ENCODE measurements at regions of chr7 and their contacts with region 1.

Region 1: GRCh38 chr7:151110941-151111645 is 24.8 kb downstream of the AGAP3 start:
- DNase-seq: peak; percentile 61 to 74 (median 72)
- H3K4me3 ChIP-seq: no peak overlapping the region
- H3K4me3 Mint-ChIP-seq: no peak overlapping the region
- H3K27ac ChIP-seq: no peak overlapping the region
- H3K27ac Mint-ChIP-seq: no peak overlapping the region
- H3K4me1 ChIP-seq: peaks cover 3 to 7% of the 10 kb centered on the region in 2 donors
- H3K4me1 Mint-ChIP-seq: peaks cover 16% of the 10 kb centered on the region
- H3K27me3 ChIP-seq: peaks cover 2 to 17% of the 10 kb centered on the region in 2 donors
- H3K27me3 Mint-ChIP-seq: peaks cover 21 to 29% (median 21%) of the 10 kb centered on the region in 3 donors
- CTCF ChIP-seq: peak; percentile 89

Region 2: GRCh38 chr7:150852371-150852920 is 258.6 kb before region 1 on chr7 and contains the start of gene AOC1:
- intact Hi-C with region 1: no loop called
- DNase-seq: no peak
- H3K4me3 ChIP-seq: no peak within 1 kb of the TSS
- H3K4me3 Mint-ChIP-seq: peak within 1 kb of the TSS; percentile 35 to 66
- H3K27ac ChIP-seq: no peak within 1 kb of the TSS
- H3K27ac Mint-ChIP-seq: no peak within 1 kb of the TSS
- H3K4me1 ChIP-seq: peaks cover 9 to 17% of the 10 kb centered on the region in 2 donors
- H3K4me1 Mint-ChIP-seq: peaks cover 19% of the 10 kb centered on the region
- H3K27me3 ChIP-seq: no peaks in the 10 kb centered on the region
- H3K27me3 Mint-ChIP-seq: peaks cover 3 to 7% (median 6%) of the 10 kb centered on the region in 3 donors
- CTCF ChIP-seq: no peak
- polyA plus RNA-seq, gene AOC1: 0.16 to 0.31 TPM in 2 of 3 donors, not detected in the other

Region 3: GRCh38 chr7:150962553-150963399 is 148.3 kb before region 1 on chr7:
- intact Hi-C with region 1: loop called in 1 of 2 experiments (anchors 5 kb)
- DNase-seq: peak; percentile 2 to 16 (median 12)
- H3K4me3 ChIP-seq: no peak overlapping the region
- H3K4me3 Mint-ChIP-seq: peak overlapping the region in 1 of 2 donors; percentile 43
- H3K27ac ChIP-seq: no peak overlapping the region
- H3K27ac Mint-ChIP-seq: peak overlapping the region in 1 of 7 donors; percentile 79
- H3K4me1 ChIP-seq: no peaks in the 10 kb centered on the region
- H3K4me1 Mint-ChIP-seq: peaks cover 10% of the 10 kb centered on the region
- H3K27me3 ChIP-seq: peaks cover 0 to 29% of the 10 kb centered on the region in 2 donors
- H3K27me3 Mint-ChIP-seq: peaks cover 30 to 75% (median 44%) of the 10 kb centered on the region in 3 donors
- CTCF ChIP-seq: peak; percentile 70

Region 4: GRCh38 chr7:151028131-151028947 is 82.8 kb before region 1 on chr7 and contains the start of gene ABCB8:
- intact Hi-C with region 1: loop called in 1 of 2 experiments (anchors 5 kb)
- DNase-seq: peak; percentile 97 to 98 (median 98)
- H3K4me3 ChIP-seq: peak within 1 kb of the TSS; percentile 53 to 98 (median 96)
- H3K4me3 Mint-ChIP-seq: peak within 1 kb of the TSS; percentile 91 to 94
- H3K27ac ChIP-seq: peak within 1 kb of the TSS; percentile 71 to 81
- H3K27ac Mint-ChIP-seq: peak within 1 kb of the TSS; percentile 91 to 97 (median 95)
- H3K4me1 ChIP-seq: peaks cover 14 to 18% of the 10 kb centered on the region in 2 donors
- H3K4me1 Mint-ChIP-seq: peaks cover 25% of the 10 kb centered on the region
- H3K27me3 ChIP-seq: peaks cover 0 to 4% of the 10 kb centered on the region in 2 donors
- H3K27me3 Mint-ChIP-seq: peaks cover 3 to 22% (median 6%) of the 10 kb centered on the region in 3 donors
- CTCF ChIP-seq: peak; percentile 64
- polyA plus RNA-seq, gene ABCB8: 9.3 to 19.9 (median 9.5) TPM

Region 5: DNA sequence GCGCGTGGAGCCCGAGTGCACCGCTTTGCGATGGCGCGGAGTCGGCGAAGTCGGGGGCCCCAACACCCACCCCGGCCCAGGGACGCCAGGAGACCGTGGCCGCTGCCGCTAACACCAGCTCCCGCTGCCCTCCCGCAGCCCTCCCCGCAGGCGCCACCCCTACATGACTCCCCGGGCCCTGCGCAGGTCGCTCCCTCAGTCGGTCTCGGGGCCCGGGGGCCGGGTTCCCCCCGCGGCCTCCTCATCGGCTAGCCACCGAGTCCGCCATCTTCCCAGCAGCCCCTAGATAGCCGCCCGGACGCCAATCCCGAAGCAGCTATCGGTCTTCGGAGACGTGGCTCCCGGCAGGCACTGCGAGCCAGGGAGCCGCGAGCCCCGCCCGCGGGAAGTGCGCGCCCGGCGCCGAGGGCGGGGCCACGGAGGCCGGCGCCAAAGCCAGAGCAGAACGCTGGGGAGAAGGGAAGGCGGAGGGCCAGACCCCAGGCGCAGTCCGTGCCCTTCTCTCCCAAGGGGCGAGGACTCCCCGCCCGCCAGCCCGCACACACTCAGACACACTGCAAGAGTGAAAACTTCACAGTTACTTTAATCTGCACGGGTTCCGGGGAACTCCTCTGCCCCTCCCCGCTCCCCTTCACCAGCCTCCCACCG is 30.4 kb before region 1 on chr7 and contains the start of gene FASTK:
- intact Hi-C with region 1: loop called in 1 of 2 experiments (anchors 5 kb)
- DNase-seq: peak; percentile 77 to 86 (median 83)
- H3K4me3 ChIP-seq: peak within 1 kb of the TSS; percentile 88 to 92 (median 89)
- H3K4me3 Mint-ChIP-seq: peak within 1 kb of the TSS; percentile 83 to 89
- H3K27ac ChIP-seq: peak within 1 kb of the TSS; percentile 52 to 83
- H3K27ac Mint-ChIP-seq: peak within 1 kb of the TSS; percentile 73 to 92 (median 84)
- H3K4me1 ChIP-seq: peaks cover 41 to 56% of the 10 kb centered on the region in 2 donors
- H3K4me1 Mint-ChIP-seq: peaks cover 40% of the 10 kb centered on the region
- H3K27me3 ChIP-seq: no peaks in the 10 kb centered on the region
- H3K27me3 Mint-ChIP-seq: peaks cover 0 to 1% (median 1%) of the 10 kb centered on the region in 3 donors
- CTCF ChIP-seq: no peak
- polyA plus RNA-seq, gene FASTK: 34.7 to 110 (median 38.6) TPM

Region 6: DNA sequence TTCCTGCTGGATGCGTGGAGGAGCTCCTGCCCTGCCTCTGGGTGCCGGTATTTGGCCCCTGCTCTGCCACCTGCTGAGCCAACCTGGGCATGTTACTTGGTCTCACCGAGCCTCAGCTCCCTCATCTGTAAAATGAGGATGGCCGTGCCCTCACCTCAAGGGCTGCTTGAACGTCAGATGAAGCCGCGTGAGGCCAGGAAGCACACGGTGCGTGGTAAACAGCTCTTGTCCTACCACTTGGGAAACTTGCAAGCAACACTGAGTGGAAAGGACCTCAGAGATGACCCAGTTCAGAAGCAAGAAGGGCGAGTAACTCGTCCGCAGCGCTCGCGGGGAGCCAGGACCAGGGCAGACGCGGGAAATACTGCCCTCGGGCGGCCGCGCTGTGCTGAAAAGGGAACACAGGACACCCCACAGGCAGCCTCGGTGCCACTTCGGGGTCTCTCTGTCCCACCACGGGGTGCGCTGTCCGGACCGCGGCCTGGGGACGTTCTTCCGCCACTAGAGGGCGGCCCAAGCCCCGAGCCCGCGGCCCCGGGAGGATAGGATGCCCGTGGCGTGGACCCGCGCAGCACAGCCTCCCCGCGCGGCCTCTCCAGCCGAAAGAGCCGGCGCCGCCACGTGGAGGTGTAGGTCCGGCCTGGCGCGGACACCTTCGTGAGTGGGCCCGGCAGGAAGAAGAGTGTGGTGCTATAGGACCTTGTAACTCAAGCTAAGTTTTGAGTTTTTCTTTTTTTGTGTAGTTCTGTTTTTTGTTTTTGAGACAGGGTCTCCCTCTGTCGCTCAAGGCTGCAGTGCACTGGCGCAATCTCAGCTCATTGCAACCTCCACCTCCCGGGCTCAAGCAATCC is 671.7 kb after region 1 on chr7:
- intact Hi-C with region 1: no loop called
- DNase-seq: peak; percentile 83 to 91 (median 88)
- H3K4me3 ChIP-seq: peak overlapping the region in 1 of 3 experiments; percentile 51
- H3K4me3 Mint-ChIP-seq: peak overlapping the region; percentile 64 to 67
- H3K27ac ChIP-seq: peak overlapping the region; percentile 17 to 28
- H3K27ac Mint-ChIP-seq: peak overlapping the region; percentile 70 to 88 (median 77)
- H3K4me1 ChIP-seq: peaks cover 9 to 14% of the 10 kb centered on the region in 2 donors
- H3K4me1 Mint-ChIP-seq: peaks cover 24% of the 10 kb centered on the region
- H3K27me3 ChIP-seq: no peaks in the 10 kb centered on the region
- H3K27me3 Mint-ChIP-seq: peaks cover 0 to 2% (median 1%) of the 10 kb centered on the region in 3 donors
- CTCF ChIP-seq: peak; percentile 98

Measured in CD14-positive monocyte (primary cell).